ENCODE measurements at regions of chr1 and their contacts with region 1.

Region 1: DNA sequence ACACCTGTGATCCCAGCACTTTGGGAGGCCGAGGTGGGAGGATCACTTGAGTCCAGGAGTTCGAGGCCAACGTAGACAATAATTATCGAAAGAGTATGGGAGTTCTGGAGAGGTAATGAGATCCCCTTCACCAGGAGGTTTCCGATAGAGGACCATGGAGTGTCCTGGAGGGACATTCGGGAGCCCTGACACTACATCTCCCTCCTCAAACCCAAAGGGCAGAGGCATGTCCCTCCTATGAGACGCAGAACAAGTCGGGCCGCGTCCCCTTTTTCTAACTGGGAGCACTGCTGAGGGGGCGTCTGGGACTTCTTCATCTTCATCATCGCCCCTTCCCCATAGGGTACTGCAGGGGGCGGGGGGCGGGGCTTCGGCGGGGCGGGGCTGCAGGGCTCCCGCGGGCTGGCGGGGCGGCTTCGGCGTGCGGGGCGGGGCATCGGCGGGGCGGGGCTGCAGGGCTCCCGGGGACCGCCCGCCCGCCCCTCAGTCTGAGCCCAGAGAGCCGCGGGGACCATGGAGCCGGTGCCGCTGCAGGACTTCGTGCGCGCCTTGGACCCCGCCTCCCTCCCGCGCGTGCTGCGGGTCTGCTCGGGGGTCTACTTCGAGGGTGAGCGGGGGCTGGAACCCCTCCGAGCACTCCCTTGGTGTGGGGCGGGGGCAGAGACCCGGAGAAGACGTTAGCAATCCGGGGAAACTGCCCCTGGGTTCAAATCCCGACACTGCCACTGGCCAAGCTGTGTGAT is at the start of gene THEMIS2:
- DNase-seq: peak; percentile 78
- ATAC-seq: peak; percentile 73
- H3K4me3 ChIP-seq: peak within 1 kb of the TSS; percentile 77 to 96 (median 81)
- H3K4me3 Mint-ChIP-seq: peak within 1 kb of the TSS; percentile 92
- H3K27ac ChIP-seq: peak within 1 kb of the TSS; percentile 48 to 72
- H3K27ac Mint-ChIP-seq: peak within 1 kb of the TSS; percentile 81
- H3K4me1 ChIP-seq: peaks cover 48 to 72% of the 10 kb centered on the region in 2 donors
- H3K4me1 Mint-ChIP-seq: peaks cover 43% of the 10 kb centered on the region
- H3K27me3 ChIP-seq: no peaks in the 10 kb centered on the region
- H3K27me3 Mint-ChIP-seq: no peaks in the 10 kb centered on the region
- CTCF ChIP-seq: no peak
- total RNA-seq, gene THEMIS2: 221 and 230 TPM in 2 replicates

Region 2: GRCh38 chr1:27568300-27569087 is 303.7 kb before region 1 on chr1:
- CTCF ChIA-PET with region 1: no interaction called
- POLR2A ChIA-PET with region 1: no interaction called
- intact Hi-C with region 1: no loop called
- DNase-seq: peak; percentile 95
- ATAC-seq: peak; percentile 92
- H3K4me3 ChIP-seq: peak overlapping the region in 4 of 5 experiments; percentile 25 to 69 (median 50)
- H3K4me3 Mint-ChIP-seq: peak overlapping the region; percentile 86
- H3K27ac ChIP-seq: peak overlapping the region; percentile 27 to 68
- H3K27ac Mint-ChIP-seq: peak overlapping the region; percentile 69
- H3K4me1 ChIP-seq: peaks cover 15 to 38% of the 10 kb centered on the region in 2 donors
- H3K4me1 Mint-ChIP-seq: peaks cover 40% of the 10 kb centered on the region
- H3K27me3 ChIP-seq: no peaks in the 10 kb centered on the region
- H3K27me3 Mint-ChIP-seq: no peaks in the 10 kb centered on the region
- CTCF ChIP-seq: peak; percentile 82

Region 3: GRCh38 chr1:27891196-27891889 is 19.1 kb after region 1 on chr1:
- CTCF ChIA-PET with region 1: interaction called, 28 read pairs
- POLR2A ChIA-PET with region 1: interaction called, 22 read pairs
- intact Hi-C with region 1: loop called (anchors 1 kb)
- DNase-seq: peak; percentile 88
- ATAC-seq: peak; percentile 81
- H3K4me3 ChIP-seq: peak overlapping the region in 2 of 5 experiments; percentile 7 to 12
- H3K4me3 Mint-ChIP-seq: peak overlapping the region; percentile 82
- H3K27ac ChIP-seq: peak overlapping the region; percentile 92 to 94
- H3K27ac Mint-ChIP-seq: peak overlapping the region; percentile 96
- H3K4me1 ChIP-seq: peaks cover 40 to 64% of the 10 kb centered on the region in 2 donors
- H3K4me1 Mint-ChIP-seq: peaks cover 57% of the 10 kb centered on the region
- H3K27me3 ChIP-seq: no peaks in the 10 kb centered on the region
- H3K27me3 Mint-ChIP-seq: no peaks in the 10 kb centered on the region
- CTCF ChIP-seq: peak; percentile 68

Region 4: DNA sequence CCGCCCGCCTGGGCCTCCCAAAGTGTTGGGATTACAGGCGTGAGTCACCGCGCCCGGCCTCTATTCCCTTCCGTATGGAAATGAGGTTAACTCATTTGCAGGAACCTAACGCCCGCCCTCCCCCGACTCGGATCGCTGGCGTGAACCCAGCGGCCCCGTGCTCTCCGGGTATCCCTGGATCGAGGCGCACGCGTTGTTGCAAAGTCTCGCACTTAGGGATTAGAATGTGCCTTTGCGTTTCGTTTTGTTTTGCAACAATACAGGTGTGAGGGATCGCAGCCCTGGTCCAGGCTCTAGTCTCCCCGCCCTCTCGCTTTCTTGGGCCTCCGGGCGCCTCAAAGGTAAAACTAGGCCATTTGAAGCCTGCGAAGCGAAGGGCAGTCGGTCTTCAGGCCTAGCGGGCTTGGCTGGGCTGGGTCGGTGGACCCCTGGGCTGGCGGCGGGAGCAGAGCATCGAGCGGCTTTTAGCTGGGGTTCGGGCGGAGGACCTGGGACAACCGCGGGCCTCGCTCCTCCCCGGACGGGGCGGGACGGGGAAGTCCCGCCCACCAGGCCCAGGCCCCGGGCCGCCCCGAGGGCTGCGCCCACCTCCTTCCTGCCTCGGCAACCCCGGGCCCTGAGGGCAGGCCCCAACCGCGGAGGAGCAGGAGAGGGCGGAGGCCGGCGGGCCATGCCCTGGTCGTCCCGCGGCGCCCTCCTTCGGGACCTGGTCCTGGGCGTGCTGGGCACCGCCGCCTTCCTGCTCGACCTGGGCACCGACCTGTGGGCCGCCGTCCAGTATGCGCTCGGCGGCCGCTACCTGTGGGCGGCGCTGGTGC is 87.4 kb after region 1 on chr1 and contains the start of gene XKR8:
- CTCF ChIA-PET with region 1: no interaction called
- POLR2A ChIA-PET with region 1: interaction called, 4 read pairs
- intact Hi-C with region 1: loop called (anchors 1 kb)
- DNase-seq: peak; percentile 88
- ATAC-seq: peak; percentile 98
- H3K4me3 ChIP-seq: peak within 1 kb of the TSS; percentile 63 to 92 (median 85)
- H3K4me3 Mint-ChIP-seq: peak within 1 kb of the TSS; percentile 93
- H3K27ac ChIP-seq: peak within 1 kb of the TSS; percentile 51 to 82
- H3K27ac Mint-ChIP-seq: peak within 1 kb of the TSS; percentile 89
- H3K4me1 ChIP-seq: peaks cover 14 to 17% of the 10 kb centered on the region in 2 donors
- H3K4me1 Mint-ChIP-seq: peaks cover 16% of the 10 kb centered on the region
- H3K27me3 ChIP-seq: peaks cover 0 to 3% (median 0%) of the 10 kb centered on the region in 4 experiments
- H3K27me3 Mint-ChIP-seq: no peaks in the 10 kb centered on the region
- CTCF ChIP-seq: peak; percentile 48
- total RNA-seq, gene XKR8: 8.7 and 10.1 TPM in 2 replicates